PC-9 (cell line): ENCODE measurements at regions of chr1 and their contacts with region 1.

Region 1: GRCh38 chr1:218171285-218171893 is 113.7 kb upstream of the RRP15 start:
- DNase-seq: no peak
- H3K4me3 ChIP-seq: no peak overlapping the region
- H3K27ac ChIP-seq: no peak overlapping the region
- H3K4me1 ChIP-seq: no peaks in the 10 kb centered on the region
- H3K27me3 ChIP-seq: no peaks in the 10 kb centered on the region
- CTCF ChIP-seq: peak; percentile 86

Region 2: GRCh38 chr1:216750012-216750627 is 1421.3 kb before region 1 on chr1:
- CTCF ChIA-PET with region 1: no interaction called
- POLR2A ChIA-PET with region 1: no interaction called
- intact Hi-C with region 1: loop called (anchors 2 kb)
- DNase-seq: no peak
- H3K4me3 ChIP-seq: no peak overlapping the region
- H3K27ac ChIP-seq: no peak overlapping the region
- H3K4me1 ChIP-seq: no peaks in the 10 kb centered on the region
- H3K27me3 ChIP-seq: no peaks in the 10 kb centered on the region
- CTCF ChIP-seq: peak; percentile 64

Region 3: GRCh38 chr1:216961516-216961915 is 1209.9 kb before region 1 on chr1:
- CTCF ChIA-PET with region 1: no interaction called
- POLR2A ChIA-PET with region 1: no interaction called
- intact Hi-C with region 1: loop called (anchors 2 kb)
- DNase-seq: no peak
- H3K4me3 ChIP-seq: no peak overlapping the region
- H3K27ac ChIP-seq: no peak overlapping the region
- H3K4me1 ChIP-seq: no peaks in the 10 kb centered on the region
- H3K27me3 ChIP-seq: no peaks in the 10 kb centered on the region
- CTCF ChIP-seq: peak; percentile 28; the same call in 1 of the 2 replicates

Region 4: GRCh38 chr1:217630711-217631591 is 540.4 kb before region 1 on chr1 and contains the starts of genes GPATCH2 and SPATA17:
- CTCF ChIA-PET with region 1: no interaction called
- POLR2A ChIA-PET with region 1: no interaction called
- intact Hi-C with region 1: no loop called
- DNase-seq: peak; percentile 74 to 81
- H3K4me3 ChIP-seq: peak within 1 kb of the TSS; percentile 77
- H3K27ac ChIP-seq: peak within 1 kb of the TSS; percentile 86
- H3K4me1 ChIP-seq: peaks cover 27% of the 10 kb centered on the region
- H3K27me3 ChIP-seq: no peaks in the 10 kb centered on the region
- CTCF ChIP-seq: no peak; the same call in 1 of the 2 replicates
- total RNA-seq, gene GPATCH2: 13.9 and 14.8 TPM in 2 replicates
- total RNA-seq, gene SPATA17: 2.9 and 8.9 TPM in 2 replicates